ENCODE measurements at regions of chr18 and their contacts with region 1.

Region 1: GRCh38 chr18:23377669-23378301 is 75.3 kb upstream of the RIOK3 start:
- DNase-seq: peak; percentile 92
- ATAC-seq: peak; percentile 67
- H3K4me3 ChIP-seq: no peak overlapping the region
- H3K27ac ChIP-seq: peak overlapping the region; percentile 95
- H3K4me1 ChIP-seq: peaks cover 12% of the 10 kb centered on the region
- H3K27me3 ChIP-seq: no peaks in the 10 kb centered on the region
- CTCF ChIP-seq: no peak
- POLR2A ChIP-seq: no peak
- RAD21 ChIP-seq: no peak

Region 2: DNA sequence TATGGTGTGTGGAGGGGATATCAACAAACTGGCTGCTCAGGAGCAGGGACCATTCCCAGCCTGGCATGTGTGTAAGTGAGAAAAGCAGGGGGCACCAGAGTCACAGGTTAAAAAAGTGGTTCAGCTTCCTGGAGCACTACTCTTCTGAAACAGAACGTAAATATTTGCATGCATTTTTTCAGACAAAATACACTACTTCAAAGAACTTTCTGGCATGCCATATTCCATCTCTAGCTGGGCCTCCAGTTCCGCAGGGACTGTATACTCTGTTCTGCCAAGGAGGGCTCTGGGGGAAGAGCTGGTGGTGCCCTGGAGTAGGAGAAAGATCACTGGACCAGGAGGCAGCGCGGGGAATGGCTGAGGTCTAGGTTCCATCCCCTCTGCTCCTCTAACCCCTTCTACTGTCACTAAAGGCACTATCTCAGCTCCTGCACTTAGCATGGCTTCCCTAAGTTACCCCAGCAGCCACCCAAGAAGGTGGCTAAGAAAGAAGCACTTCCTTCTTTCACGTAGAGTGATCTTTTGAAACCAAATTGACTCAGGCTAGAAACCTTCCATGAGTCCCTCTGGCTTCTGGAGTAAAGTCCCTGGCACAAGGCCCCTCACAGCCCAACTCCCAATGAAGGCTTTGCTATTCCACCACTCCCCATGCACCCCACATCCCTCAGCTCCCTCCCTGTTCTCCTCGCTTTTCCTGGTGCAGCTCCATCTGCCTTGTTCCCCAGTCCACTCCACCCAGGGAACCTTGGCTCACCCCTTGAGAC is 300.1 kb before region 1 on chr18:
- CTCF ChIA-PET with region 1: no interaction called
- POLR2A ChIA-PET with region 1: no interaction called
- dilution Hi-C with region 1: no loop called
- in situ Hi-C with region 1: no loop called
- intact Hi-C with region 1: loop called (anchors 1 kb)
- DNase-seq: no peak
- ATAC-seq: peak; percentile 19; the same call in 1 of the 2 replicates
- H3K4me3 ChIP-seq: no peak overlapping the region
- H3K27ac ChIP-seq: peak overlapping the region; percentile 65
- H3K4me1 ChIP-seq: peaks cover 14% of the 10 kb centered on the region
- H3K27me3 ChIP-seq: no peaks in the 10 kb centered on the region
- CTCF ChIP-seq: peak; percentile 28; the same call in 1 of the 2 replicates
- POLR2A ChIP-seq: no peak
- RAD21 ChIP-seq: peak; percentile 41

Region 3: DNA sequence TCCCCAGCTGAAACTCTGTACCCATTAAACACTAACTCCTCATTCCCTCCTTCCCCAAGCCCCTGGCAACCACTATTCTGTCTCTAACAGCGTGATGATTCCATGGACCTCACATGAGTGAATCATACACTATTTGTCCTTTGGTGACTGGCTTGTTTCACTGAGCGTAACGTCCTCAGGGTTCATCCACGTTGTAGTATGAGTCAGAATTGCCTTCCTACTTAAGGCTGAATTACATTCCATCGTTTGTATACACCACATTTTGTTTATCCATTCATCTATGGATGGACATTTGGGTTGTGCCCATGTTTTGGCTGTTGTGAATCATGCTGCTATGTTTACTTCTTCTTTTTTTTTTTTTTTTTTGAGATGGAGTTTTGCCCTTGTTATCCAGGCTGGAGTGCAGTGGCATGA is 262.1 kb before region 1 on chr18:
- CTCF ChIA-PET with region 1: no interaction called
- POLR2A ChIA-PET with region 1: no interaction called
- dilution Hi-C with region 1: no loop called
- in situ Hi-C with region 1: no loop called
- intact Hi-C with region 1: loop called (anchors 5 kb)
- DNase-seq: peak; percentile 100
- ATAC-seq: peak; percentile 94
- H3K4me3 ChIP-seq: no peak overlapping the region
- H3K27ac ChIP-seq: peak overlapping the region; percentile 89; the same call in 1 of the 2 replicates
- H3K4me1 ChIP-seq: peaks cover 21% of the 10 kb centered on the region
- H3K27me3 ChIP-seq: no peaks in the 10 kb centered on the region
- CTCF ChIP-seq: no peak
- POLR2A ChIP-seq: peak; percentile 58
- RAD21 ChIP-seq: no peak

Region 4: DNA sequence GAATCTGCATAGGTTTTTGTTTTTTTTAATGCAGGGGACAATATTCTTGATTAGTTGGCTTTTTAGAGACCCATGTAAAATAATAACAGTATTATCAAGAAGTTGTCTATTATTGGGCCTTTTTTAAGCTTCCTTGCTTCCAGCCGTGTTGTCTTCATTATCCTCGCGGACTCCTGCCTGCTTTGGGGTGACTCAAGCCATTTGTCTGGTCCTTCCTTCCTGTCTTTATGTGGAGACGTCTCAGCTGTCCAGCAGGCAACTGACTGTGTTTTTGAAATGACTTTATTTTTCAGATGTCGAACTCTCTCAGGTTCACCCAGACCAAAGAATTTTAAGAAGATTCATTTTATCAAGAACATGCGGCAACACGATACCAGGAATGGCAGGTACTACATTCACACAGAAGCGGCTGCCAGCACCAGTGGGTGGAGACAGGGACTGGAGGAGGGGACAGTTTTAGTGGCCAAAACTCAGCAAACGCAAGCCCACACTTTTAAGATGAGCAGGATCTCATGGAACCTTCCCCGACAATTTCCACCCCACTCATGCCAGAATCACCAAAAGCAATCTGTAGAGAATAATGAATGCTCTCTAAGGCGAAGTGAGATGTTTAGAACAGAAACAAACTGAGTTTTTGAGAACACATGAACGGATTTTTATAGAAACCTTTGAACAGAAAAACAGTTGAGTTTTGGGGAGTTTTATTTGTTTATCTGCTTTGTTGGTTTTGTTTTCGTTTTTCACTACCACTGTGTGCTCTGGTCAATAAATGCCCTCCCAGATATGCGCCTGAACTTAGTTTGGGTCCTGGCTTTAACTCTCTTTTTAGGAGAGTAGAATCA is 183.4 kb before region 1 on chr18:
- CTCF ChIA-PET with region 1: no interaction called
- POLR2A ChIA-PET with region 1: no interaction called
- dilution Hi-C with region 1: no loop called
- in situ Hi-C with region 1: no loop called
- intact Hi-C with region 1: no loop called
- DNase-seq: peak; percentile 65
- ATAC-seq: peak; percentile 35; the same call in 1 of the 2 replicates
- H3K4me3 ChIP-seq: no peak overlapping the region
- H3K27ac ChIP-seq: peak overlapping the region; percentile 29; the same call in 1 of the 2 replicates
- H3K4me1 ChIP-seq: peaks cover 30% of the 10 kb centered on the region
- H3K27me3 ChIP-seq: no peaks in the 10 kb centered on the region
- CTCF ChIP-seq: no peak
- POLR2A ChIP-seq: no peak
- RAD21 ChIP-seq: no peak

Region 5: GRCh38 chr18:23207191-23207955 is 170.4 kb before region 1 on chr18:
- CTCF ChIA-PET with region 1: no interaction called
- POLR2A ChIA-PET with region 1: no interaction called
- dilution Hi-C with region 1: no loop called
- in situ Hi-C with region 1: no loop called
- intact Hi-C with region 1: loop called (anchors 5 kb)
- DNase-seq: peak; percentile 68
- ATAC-seq: peak; percentile 58
- H3K4me3 ChIP-seq: no peak overlapping the region
- H3K27ac ChIP-seq: no peak overlapping the region
- H3K4me1 ChIP-seq: peaks cover 17% of the 10 kb centered on the region
- H3K27me3 ChIP-seq: no peaks in the 10 kb centered on the region
- CTCF ChIP-seq: peak; percentile 30
- POLR2A ChIP-seq: no peak
- RAD21 ChIP-seq: peak; percentile 6; the same call in 1 of the 2 replicates

Region 6: GRCh38 chr18:23228102-23229061 is 149.4 kb before region 1 on chr18:
- CTCF ChIA-PET with region 1: no interaction called
- POLR2A ChIA-PET with region 1: no interaction called
- dilution Hi-C with region 1: no loop called
- in situ Hi-C with region 1: no loop called
- intact Hi-C with region 1: loop called (anchors 1 kb)
- DNase-seq: peak; percentile 75
- ATAC-seq: no peak
- H3K4me3 ChIP-seq: no peak overlapping the region
- H3K27ac ChIP-seq: peak overlapping the region; percentile 72
- H3K4me1 ChIP-seq: peaks cover 38% of the 10 kb centered on the region
- H3K27me3 ChIP-seq: no peaks in the 10 kb centered on the region
- CTCF ChIP-seq: no peak
- POLR2A ChIP-seq: no peak
- RAD21 ChIP-seq: no peak

Region 7: DNA sequence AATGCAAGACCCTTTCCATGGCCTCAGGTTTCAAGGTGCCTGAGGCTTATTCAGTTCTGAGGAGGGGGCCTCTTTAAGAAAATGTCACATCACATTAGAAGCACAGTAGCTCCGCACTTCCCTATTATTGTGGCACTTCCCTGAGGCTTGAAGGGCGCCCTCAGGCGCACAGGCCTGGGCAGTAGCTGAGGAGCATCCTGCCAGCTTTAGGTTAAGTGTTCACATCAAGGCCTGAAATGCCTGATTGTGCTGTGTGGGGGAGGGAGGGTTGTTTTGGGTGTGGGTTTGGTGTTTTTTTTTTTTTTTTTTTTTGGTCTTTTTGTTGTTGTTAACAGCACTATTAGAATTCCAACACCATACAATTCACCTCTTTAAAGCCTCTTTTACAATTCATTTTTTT is 134.6 kb before region 1 on chr18:
- CTCF ChIA-PET with region 1: no interaction called
- POLR2A ChIA-PET with region 1: no interaction called
- dilution Hi-C with region 1: no loop called
- in situ Hi-C with region 1: no loop called
- intact Hi-C with region 1: no loop called
- DNase-seq: no peak
- ATAC-seq: no peak
- H3K4me3 ChIP-seq: no peak overlapping the region
- H3K27ac ChIP-seq: no peak overlapping the region
- H3K4me1 ChIP-seq: peaks cover 4% of the 10 kb centered on the region; the same call in 1 of the 2 replicates
- H3K27me3 ChIP-seq: no peaks in the 10 kb centered on the region
- CTCF ChIP-seq: no peak
- POLR2A ChIP-seq: no peak
- RAD21 ChIP-seq: no peak